Caco-2 (cell line): ENCODE measurements at regions of chr11 and their contacts with region 1.

Region 1: DNA sequence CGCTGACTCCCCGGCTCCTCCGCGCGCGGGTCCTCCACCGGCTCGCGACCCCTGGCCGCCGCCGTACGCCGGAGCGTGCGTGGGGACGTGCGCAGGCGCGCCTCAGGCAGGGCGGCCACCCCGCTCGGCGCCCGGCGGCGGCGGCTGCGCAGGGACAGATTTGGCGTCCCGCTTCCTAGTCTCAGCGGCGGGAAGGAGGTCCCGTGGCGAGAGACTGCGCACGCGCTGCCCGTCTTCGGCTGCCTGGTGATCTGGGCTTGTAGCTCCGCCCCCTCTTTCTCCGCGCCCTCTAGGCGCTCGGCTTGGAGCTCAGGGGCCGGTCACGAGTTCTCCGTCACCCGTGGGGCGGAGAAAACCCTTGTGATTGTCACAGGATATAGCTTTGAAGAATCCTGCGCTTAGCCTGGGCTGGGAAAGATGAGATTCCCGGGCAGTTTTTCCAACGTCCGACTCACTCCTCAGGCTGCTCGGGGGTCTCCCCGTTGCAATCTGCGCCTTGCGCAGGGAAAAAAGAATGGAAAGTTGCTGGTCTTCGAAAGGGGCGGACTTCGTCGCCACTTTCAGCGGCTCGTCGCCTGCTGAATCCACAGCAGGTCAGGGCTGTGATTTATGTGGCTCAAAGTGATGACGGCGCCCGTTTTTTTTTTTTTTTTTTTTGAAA is at the start of gene PATL1:
- DNase-seq: peak; percentile 99
- H3K4me3 ChIP-seq: peak within 1 kb of the TSS; percentile 96
- H3K4me3 Mint-ChIP-seq: peak within 1 kb of the TSS; percentile 96
- H3K27ac Mint-ChIP-seq: peak within 1 kb of the TSS; percentile 100
- H3K4me1 ChIP-seq: peaks cover 5% of the 10 kb centered on the region
- H3K4me1 Mint-ChIP-seq: peaks cover 14% of the 10 kb centered on the region
- H3K27me3 ChIP-seq: no peaks in the 10 kb centered on the region
- H3K27me3 Mint-ChIP-seq: no peaks in the 10 kb centered on the region
- CTCF ChIP-seq: no peak
- total RNA-seq, gene PATL1: 57.8 and 61.4 TPM in 2 replicates

Region 2: DNA sequence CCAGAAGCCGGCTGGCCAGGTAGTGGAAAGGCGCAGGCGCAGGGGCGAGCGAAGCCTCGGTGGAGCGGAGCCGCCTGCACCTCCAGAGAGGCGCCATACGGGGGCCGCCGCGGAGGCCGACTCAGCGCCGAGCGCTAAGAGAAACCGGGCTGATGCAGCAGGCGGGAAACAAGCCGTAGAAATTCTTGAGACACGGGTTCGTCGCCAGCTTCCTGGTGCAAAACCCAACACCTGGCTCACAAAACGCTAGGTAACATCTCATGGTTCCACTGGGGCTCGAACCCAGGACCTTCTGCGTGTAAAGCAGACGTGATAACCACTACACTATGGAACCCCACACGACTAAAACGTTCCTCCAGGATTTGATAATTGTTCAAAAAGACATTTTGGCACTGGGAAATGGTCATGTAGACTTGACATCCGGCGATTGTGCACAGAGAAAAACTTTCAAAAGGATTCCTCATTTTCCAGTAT is 118.7 kb before region 1 on chr11:
- CTCF ChIA-PET with region 1: no interaction called
- POLR2A ChIA-PET with region 1: interaction called, 11 read pairs
- intact Hi-C with region 1: loop called (anchors 1 kb)
- DNase-seq: peak; percentile 96 to 97
- H3K4me3 ChIP-seq: peak overlapping the region; percentile 58
- H3K4me3 Mint-ChIP-seq: peak overlapping the region; percentile 80
- H3K27ac Mint-ChIP-seq: peak overlapping the region; percentile 100
- H3K4me1 ChIP-seq: peaks cover 28% of the 10 kb centered on the region
- H3K4me1 Mint-ChIP-seq: peaks cover 32% of the 10 kb centered on the region
- H3K27me3 ChIP-seq: no peaks in the 10 kb centered on the region
- H3K27me3 Mint-ChIP-seq: peaks cover 7% of the 10 kb centered on the region
- CTCF ChIP-seq: peak; percentile 28 to 63

Region 3: DNA sequence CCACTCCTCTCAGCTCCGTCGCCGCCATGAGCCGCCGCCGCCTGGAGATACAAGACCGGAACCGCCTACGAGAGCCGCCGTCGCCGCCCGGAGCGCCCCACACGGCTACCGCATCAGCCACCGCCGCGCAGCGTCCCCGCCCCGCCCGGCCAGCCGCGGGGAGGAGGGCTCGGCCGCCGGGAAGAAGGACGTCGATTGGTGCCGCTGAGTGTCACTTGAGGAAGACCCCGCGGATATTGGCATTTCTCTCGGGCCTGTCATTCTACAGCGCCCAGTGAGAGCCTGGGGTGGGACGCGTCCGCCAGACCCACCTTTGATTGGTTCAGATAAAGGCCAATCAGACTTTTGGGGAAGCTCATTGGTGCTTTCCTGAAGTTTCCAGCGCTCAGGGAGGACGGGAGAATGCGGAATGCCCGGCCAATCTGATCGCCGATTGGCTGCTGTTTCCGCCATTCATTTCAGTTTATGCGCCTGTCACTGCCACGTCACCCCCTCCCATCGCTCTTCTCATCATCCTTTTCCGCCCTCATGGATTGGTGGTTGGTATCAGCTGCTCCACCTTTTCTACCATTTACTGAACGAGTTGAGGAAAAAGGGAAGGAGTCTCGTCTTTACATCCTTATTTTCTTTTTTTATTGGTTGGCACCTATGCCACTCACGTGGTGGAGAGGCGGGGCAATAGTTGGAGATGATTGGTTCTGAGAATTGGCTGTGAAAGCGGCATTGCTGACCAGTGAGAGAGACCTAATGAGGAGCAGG is 53.3 kb before region 1 on chr11 and contains the start of gene OSBP:
- CTCF ChIA-PET with region 1: interaction called, 7 read pairs
- POLR2A ChIA-PET with region 1: interaction called, 51 read pairs
- intact Hi-C with region 1: loop called (anchors 1 kb)
- DNase-seq: peak; percentile 99 to 100
- H3K4me3 ChIP-seq: peak within 1 kb of the TSS; percentile 92
- H3K4me3 Mint-ChIP-seq: peak within 1 kb of the TSS; percentile 98
- H3K27ac Mint-ChIP-seq: peak within 1 kb of the TSS; percentile 98
- H3K4me1 ChIP-seq: peaks cover 29% of the 10 kb centered on the region
- H3K4me1 Mint-ChIP-seq: peaks cover 29% of the 10 kb centered on the region
- H3K27me3 ChIP-seq: no peaks in the 10 kb centered on the region
- H3K27me3 Mint-ChIP-seq: no peaks in the 10 kb centered on the region
- CTCF ChIP-seq: no peak
- total RNA-seq, gene OSBP: 64.5 and 67.5 TPM in 2 replicates

Region 4: DNA sequence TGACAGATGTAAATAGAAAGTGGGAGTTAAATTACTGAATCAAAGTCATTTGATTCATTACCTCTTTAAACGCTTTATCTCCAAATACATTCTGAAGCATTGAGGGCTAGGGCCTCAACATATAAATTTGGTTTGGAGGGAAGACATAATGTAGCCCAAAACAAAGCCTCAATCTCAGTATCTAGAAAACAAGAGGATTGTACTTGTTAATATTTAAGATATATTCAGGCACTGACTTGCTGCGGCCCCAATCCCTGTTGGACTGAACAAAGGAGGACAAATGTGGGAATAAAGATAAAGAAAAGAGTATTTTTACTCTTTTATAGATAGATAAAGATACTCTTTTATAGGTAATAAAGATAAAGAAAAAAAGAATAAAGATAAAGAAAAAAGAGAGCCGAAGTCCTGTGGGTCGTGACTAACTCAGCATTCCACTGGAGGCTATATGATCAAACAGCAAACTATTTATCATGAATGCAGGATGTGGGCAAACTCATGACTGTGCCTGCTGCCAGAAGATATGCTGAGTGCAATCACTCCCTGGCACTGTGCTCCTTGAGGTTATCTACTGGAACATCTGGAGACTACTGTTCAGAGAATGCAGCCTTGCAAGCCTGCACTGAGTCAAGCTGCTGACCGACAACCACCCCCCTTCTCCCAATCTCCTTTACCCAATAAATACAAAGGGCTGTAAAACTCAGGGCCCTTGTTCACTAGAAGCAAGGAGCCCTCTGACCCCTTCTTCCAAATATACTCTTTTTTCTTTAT is 37.6 kb after region 1 on chr11:
- CTCF ChIA-PET with region 1: interaction called, 3 read pairs
- POLR2A ChIA-PET with region 1: interaction called, 16 read pairs
- intact Hi-C with region 1: loop called (anchors 1 kb)
- DNase-seq: peak; percentile 88 to 95
- H3K4me3 ChIP-seq: no peak overlapping the region
- H3K4me3 Mint-ChIP-seq: peak overlapping the region; percentile 34
- H3K27ac Mint-ChIP-seq: peak overlapping the region; percentile 84
- H3K4me1 ChIP-seq: peaks cover 53% of the 10 kb centered on the region
- H3K4me1 Mint-ChIP-seq: peaks cover 30% of the 10 kb centered on the region
- H3K27me3 ChIP-seq: no peaks in the 10 kb centered on the region
- H3K27me3 Mint-ChIP-seq: no peaks in the 10 kb centered on the region
- CTCF ChIP-seq: no peak